Caco-2 (cell line): ENCODE measurements at regions of chr18 and their contacts with region 1.

Region 1: GRCh38 chr18:63088262-63088661 is 231.3 kb downstream of the BCL2 start:
- DNase-seq: peak; percentile 78 to 90
- H3K4me3 ChIP-seq: no peak overlapping the region
- H3K4me3 Mint-ChIP-seq: peak overlapping the region; percentile 58
- H3K27ac Mint-ChIP-seq: peak overlapping the region; percentile 90
- H3K4me1 ChIP-seq: peaks cover 21% of the 10 kb centered on the region
- H3K4me1 Mint-ChIP-seq: peaks cover 21% of the 10 kb centered on the region
- H3K27me3 ChIP-seq: no peaks in the 10 kb centered on the region
- H3K27me3 Mint-ChIP-seq: no peaks in the 10 kb centered on the region
- CTCF ChIP-seq: no peak

Region 2: GRCh38 chr18:63054901-63055584 is 33.2 kb before region 1 on chr18:
- CTCF ChIA-PET with region 1: no interaction called
- POLR2A ChIA-PET with region 1: no interaction called
- intact Hi-C with region 1: no loop called
- DNase-seq: no peak
- H3K4me3 ChIP-seq: no peak overlapping the region
- H3K4me3 Mint-ChIP-seq: no peak overlapping the region
- H3K27ac Mint-ChIP-seq: no peak overlapping the region
- H3K4me1 ChIP-seq: no peaks in the 10 kb centered on the region
- H3K4me1 Mint-ChIP-seq: no peaks in the 10 kb centered on the region
- H3K27me3 ChIP-seq: no peaks in the 10 kb centered on the region
- H3K27me3 Mint-ChIP-seq: no peaks in the 10 kb centered on the region
- CTCF ChIP-seq: no peak

Region 3: GRCh38 chr18:63099848-63100629 is 11.8 kb after region 1 on chr18:
- CTCF ChIA-PET with region 1: interaction called, 4 read pairs
- POLR2A ChIA-PET with region 1: no interaction called
- intact Hi-C with region 1: loop called (anchors 1 kb)
- DNase-seq: peak; percentile 59 to 71
- H3K4me3 ChIP-seq: no peak overlapping the region
- H3K4me3 Mint-ChIP-seq: peak overlapping the region; percentile 42
- H3K27ac Mint-ChIP-seq: peak overlapping the region; percentile 73
- H3K4me1 ChIP-seq: peaks cover 26% of the 10 kb centered on the region
- H3K4me1 Mint-ChIP-seq: peaks cover 18% of the 10 kb centered on the region
- H3K27me3 ChIP-seq: no peaks in the 10 kb centered on the region
- H3K27me3 Mint-ChIP-seq: no peaks in the 10 kb centered on the region
- CTCF ChIP-seq: no peak

Region 4: GRCh38 chr18:63131106-63131958 is 43.1 kb after region 1 on chr18:
- CTCF ChIA-PET with region 1: no interaction called
- POLR2A ChIA-PET with region 1: no interaction called
- intact Hi-C with region 1: loop called (anchors 5 kb)
- DNase-seq: no peak
- H3K4me3 ChIP-seq: no peak overlapping the region
- H3K4me3 Mint-ChIP-seq: no peak overlapping the region
- H3K27ac Mint-ChIP-seq: no peak overlapping the region
- H3K4me1 ChIP-seq: peaks cover 14% of the 10 kb centered on the region
- H3K4me1 Mint-ChIP-seq: peaks cover 9% of the 10 kb centered on the region
- H3K27me3 ChIP-seq: no peaks in the 10 kb centered on the region
- H3K27me3 Mint-ChIP-seq: no peaks in the 10 kb centered on the region
- CTCF ChIP-seq: peak; percentile 9 to 10

Region 5: GRCh38 chr18:63192885-63193349 is 104.7 kb after region 1 on chr18:
- CTCF ChIA-PET with region 1: no interaction called
- POLR2A ChIA-PET with region 1: no interaction called
- intact Hi-C with region 1: no loop called
- DNase-seq: no peak
- H3K4me3 ChIP-seq: no peak overlapping the region
- H3K4me3 Mint-ChIP-seq: no peak overlapping the region
- H3K27ac Mint-ChIP-seq: no peak overlapping the region
- H3K4me1 ChIP-seq: no peaks in the 10 kb centered on the region; the same call in 1 of the 2 replicates
- H3K4me1 Mint-ChIP-seq: no peaks in the 10 kb centered on the region
- H3K27me3 ChIP-seq: no peaks in the 10 kb centered on the region
- H3K27me3 Mint-ChIP-seq: no peaks in the 10 kb centered on the region
- CTCF ChIP-seq: no peak